PC-3 (cell line): ENCODE measurements at regions of chr12 and their contacts with region 1.

Region 1: GRCh38 chr12:110224379-110225304 is 56.4 kb upstream of the ATP2A2 start:
- DNase-seq: peak; percentile 91
- ATAC-seq: peak; percentile 65
- H3K4me3 ChIP-seq: peak overlapping the region; percentile 64
- H3K27ac ChIP-seq: peak overlapping the region; percentile 91
- H3K4me1 ChIP-seq: peaks cover 27% of the 10 kb centered on the region
- H3K27me3 ChIP-seq: no peaks in the 10 kb centered on the region
- CTCF ChIP-seq: peak; percentile 80

Region 2: DNA sequence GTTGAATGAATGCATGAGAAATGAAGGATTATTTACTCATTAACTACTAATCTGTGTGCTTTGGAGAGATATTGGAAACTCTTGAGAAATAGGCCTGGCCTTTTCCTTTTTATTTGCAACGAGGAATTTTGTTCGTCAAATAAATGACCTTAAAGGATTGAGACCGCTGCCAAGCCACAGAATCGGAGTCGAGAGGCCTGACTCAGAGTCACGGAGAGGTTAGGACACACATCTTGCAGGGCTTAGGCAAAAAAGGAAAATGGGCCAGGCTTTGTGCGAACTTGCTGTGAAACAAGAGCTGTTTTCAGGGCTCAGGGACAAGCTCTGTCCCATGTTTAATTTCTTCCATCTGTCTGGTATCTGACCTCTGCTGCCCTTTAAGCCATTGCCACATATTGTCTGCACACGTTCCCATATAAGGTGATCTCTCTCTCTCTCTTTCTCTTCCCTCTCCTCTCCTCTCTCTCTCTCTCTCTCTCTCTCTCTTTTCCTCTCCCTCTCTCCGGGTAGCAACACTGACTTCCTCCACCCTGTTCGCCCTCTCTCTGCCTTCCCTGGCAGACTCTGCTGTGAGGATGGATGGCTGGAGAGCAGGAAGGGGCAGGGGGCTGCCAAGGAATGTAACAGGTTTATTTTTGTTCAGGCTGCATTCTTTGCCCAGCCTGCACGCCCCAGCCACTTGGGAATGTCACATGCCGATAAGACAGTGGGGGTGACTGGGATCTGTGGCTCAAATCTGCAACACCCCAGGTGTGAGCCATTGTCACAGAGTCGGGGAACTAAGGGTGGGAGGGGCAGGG is 115.4 kb before region 1 on chr12:
- CTCF ChIA-PET with region 1: no interaction called
- POLR2A ChIA-PET with region 1: no interaction called
- intact Hi-C with region 1: loop called (anchors 2 kb)
- DNase-seq: peak; percentile 96
- ATAC-seq: peak; percentile 94
- H3K4me3 ChIP-seq: peak overlapping the region; percentile 52
- H3K27ac ChIP-seq: peak overlapping the region; percentile 93
- H3K4me1 ChIP-seq: peaks cover 26% of the 10 kb centered on the region
- H3K27me3 ChIP-seq: no peaks in the 10 kb centered on the region
- CTCF ChIP-seq: no peak

Region 3: GRCh38 chr12:110124184-110124995 is 100.3 kb before region 1 on chr12 and contains the start of gene IFT81:
- CTCF ChIA-PET with region 1: no interaction called
- POLR2A ChIA-PET with region 1: no interaction called
- intact Hi-C with region 1: loop called (anchors 1 kb)
- DNase-seq: peak; percentile 97
- ATAC-seq: peak; percentile 91
- H3K4me3 ChIP-seq: peak within 1 kb of the TSS; percentile 86
- H3K27ac ChIP-seq: peak within 1 kb of the TSS; percentile 51
- H3K4me1 ChIP-seq: peaks cover 6% of the 10 kb centered on the region
- H3K27me3 ChIP-seq: no peaks in the 10 kb centered on the region
- CTCF ChIP-seq: no peak
- total RNA-seq, gene IFT81: 7.2 and 10.1 TPM in 2 replicates

Region 4: DNA sequence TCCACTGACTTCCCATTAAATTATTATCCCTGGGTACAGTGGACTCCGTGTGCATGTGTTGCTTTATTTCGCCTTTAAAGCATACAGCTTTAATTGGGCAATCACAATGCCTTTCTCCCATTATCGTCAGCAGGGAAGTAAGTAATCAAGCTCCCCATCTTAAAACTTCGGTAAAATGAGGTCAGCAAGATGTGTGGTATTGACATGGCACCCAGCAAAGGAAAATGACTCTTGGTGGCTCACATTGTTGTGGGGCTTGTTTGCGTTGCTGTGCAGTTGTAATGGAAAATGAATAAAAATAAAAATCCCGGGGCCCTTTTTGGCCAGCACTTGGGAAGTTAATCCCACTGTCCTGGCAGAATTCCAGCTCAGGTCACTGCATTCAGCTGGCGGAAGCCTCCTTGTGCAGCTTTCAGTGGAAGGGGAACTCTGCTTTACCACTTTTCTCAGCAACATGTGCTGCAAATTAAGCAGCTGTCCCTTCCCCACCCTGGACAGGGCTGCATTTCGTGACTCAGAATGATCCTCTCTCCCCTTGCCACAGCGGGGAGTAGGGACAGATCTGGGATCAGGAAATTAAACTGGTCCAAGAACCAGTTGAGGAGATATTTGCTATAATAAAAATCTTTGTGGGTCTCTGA is 42.5 kb after region 1 on chr12:
- CTCF ChIA-PET with region 1: no interaction called
- POLR2A ChIA-PET with region 1: no interaction called
- intact Hi-C with region 1: no loop called
- DNase-seq: peak; percentile 77
- ATAC-seq: peak; percentile 42
- H3K4me3 ChIP-seq: no peak overlapping the region; the same call in 1 of the 2 replicates
- H3K27ac ChIP-seq: peak overlapping the region; percentile 63
- H3K4me1 ChIP-seq: peaks cover 50% of the 10 kb centered on the region
- H3K27me3 ChIP-seq: no peaks in the 10 kb centered on the region
- CTCF ChIP-seq: no peak

Region 5: GRCh38 chr12:110280779-110281548 is 56.3 kb after region 1 on chr12 and contains the start of gene ATP2A2:
- CTCF ChIA-PET with region 1: interaction called, 11 read pairs
- POLR2A ChIA-PET with region 1: interaction called, 4 read pairs
- intact Hi-C with region 1: loop called (anchors 1 kb)
- DNase-seq: peak; percentile 96
- ATAC-seq: peak; percentile 73
- H3K4me3 ChIP-seq: peak within 1 kb of the TSS; percentile 85
- H3K27ac ChIP-seq: peak within 1 kb of the TSS; percentile 84
- H3K4me1 ChIP-seq: peaks cover 39% of the 10 kb centered on the region
- H3K27me3 ChIP-seq: no peaks in the 10 kb centered on the region
- CTCF ChIP-seq: no peak
- total RNA-seq, gene ATP2A2: 174 and 211 TPM in 2 replicates

Region 6: DNA sequence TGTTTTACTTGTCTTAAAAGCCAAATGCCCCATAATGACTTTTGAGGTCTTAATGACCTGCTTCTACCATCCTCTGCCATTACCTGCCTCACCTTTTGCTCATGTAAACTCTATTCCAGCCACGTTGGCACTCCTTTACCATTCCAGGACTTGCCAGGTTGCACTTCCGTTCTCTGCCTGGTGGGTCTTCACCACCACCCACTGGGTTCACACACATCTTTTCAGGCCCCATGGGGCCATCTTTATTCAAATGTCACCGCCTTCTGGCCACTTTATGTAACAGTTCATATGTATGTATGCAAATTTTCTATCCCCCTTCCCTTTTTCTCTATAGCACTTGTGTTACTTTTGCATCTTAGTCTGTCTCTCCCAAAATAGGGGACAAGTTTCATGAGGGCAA is 114.1 kb after region 1 on chr12:
- CTCF ChIA-PET with region 1: no interaction called
- POLR2A ChIA-PET with region 1: no interaction called
- intact Hi-C with region 1: loop called (anchors 2 kb)
- DNase-seq: peak; percentile 25
- ATAC-seq: peak; percentile 8; the same call in 1 of the 2 replicates
- H3K4me3 ChIP-seq: no peak overlapping the region
- H3K27ac ChIP-seq: peak overlapping the region; percentile 73
- H3K4me1 ChIP-seq: peaks cover 21% of the 10 kb centered on the region
- H3K27me3 ChIP-seq: no peaks in the 10 kb centered on the region
- CTCF ChIP-seq: peak; percentile 61